PC-9 (cell line): ENCODE measurements at regions of chr1 and their contacts with region 1.

Region 1: GRCh38 chr1:30252376-30252775 is 471.0 kb downstream of the MATN1 start:
- DNase-seq: no peak
- H3K4me3 ChIP-seq: no peak overlapping the region
- H3K27ac ChIP-seq: no peak overlapping the region
- H3K4me1 ChIP-seq: no peaks in the 10 kb centered on the region
- H3K27me3 ChIP-seq: peaks cover 59% of the 10 kb centered on the region
- CTCF ChIP-seq: no peak

Region 2: GRCh38 chr1:29903548-29904166 is 348.7 kb before region 1 on chr1:
- CTCF ChIA-PET with region 1: no interaction called
- POLR2A ChIA-PET with region 1: interaction called, 11 read pairs
- intact Hi-C with region 1: no loop called
- DNase-seq: no peak
- H3K4me3 ChIP-seq: no peak overlapping the region
- H3K27ac ChIP-seq: no peak overlapping the region
- H3K4me1 ChIP-seq: no peaks in the 10 kb centered on the region
- H3K27me3 ChIP-seq: peaks cover 4% of the 10 kb centered on the region; the same call in 1 of the 2 replicates
- CTCF ChIP-seq: no peak